ENCODE measurements at regions of chr17 and their contacts with region 1.

Region 1: GRCh38 chr17:55040611-55041010 is 72.0 kb downstream of the STXBP4 start:
- DNase-seq: no peak
- H3K4me3 ChIP-seq: no peak overlapping the region
- H3K27ac ChIP-seq: no peak overlapping the region
- H3K4me1 ChIP-seq: no peaks in the 10 kb centered on the region; a peak in 1 of 4 replicates
- H3K27me3 ChIP-seq: no peaks in the 10 kb centered on the region
- CTCF ChIP-seq: no peak
- EP300 ChIP-seq: no peak
- RAD21 ChIP-seq: no peak

Region 2: GRCh38 chr17:54982399-54982798 is 58.2 kb before region 1 on chr17:
- CTCF ChIA-PET with region 1: no interaction called
- POLR2A ChIA-PET with region 1: no interaction called
- DNase-seq: no peak
- H3K4me3 ChIP-seq: no peak overlapping the region
- H3K27ac ChIP-seq: peak overlapping the region in 1 of 2 experiments; percentile 5; a peak in 1 of 4 replicates
- H3K4me1 ChIP-seq: peaks cover 0 to 15% of the 10 kb centered on the region in 2 experiments; a peak in 2 of 4 replicates
- H3K27me3 ChIP-seq: no peaks in the 10 kb centered on the region
- CTCF ChIP-seq: no peak
- EP300 ChIP-seq: no peak
- RAD21 ChIP-seq: no peak

Region 3: DNA sequence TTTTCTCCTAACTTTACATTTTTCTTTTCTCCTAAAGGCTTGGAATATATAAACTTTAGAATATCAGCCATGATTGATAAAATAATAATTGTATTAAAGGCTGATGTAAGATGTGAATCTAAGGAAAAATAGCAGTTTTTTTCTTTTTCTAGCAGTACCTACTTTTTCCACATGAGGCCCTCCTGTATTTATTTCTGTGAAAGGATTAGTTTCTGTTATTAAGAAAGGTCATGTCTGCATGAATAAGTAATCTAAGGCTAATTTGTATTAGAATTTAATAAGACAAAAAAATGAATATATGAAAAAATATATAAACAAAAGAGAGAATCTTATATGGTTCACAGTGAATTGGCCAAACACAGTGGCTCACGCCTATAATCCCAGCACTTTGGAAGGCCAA is 13.2 kb after region 1 on chr17:
- CTCF ChIA-PET with region 1: interaction called, 15 read pairs
- POLR2A ChIA-PET with region 1: no interaction called
- DNase-seq: peak; percentile 3
- H3K4me3 ChIP-seq: no peak overlapping the region
- H3K27ac ChIP-seq: no peak overlapping the region
- H3K4me1 ChIP-seq: peaks cover 5% of the 10 kb centered on the region in 2 experiments; a peak in 3 of 4 replicates
- H3K27me3 ChIP-seq: no peaks in the 10 kb centered on the region
- CTCF ChIP-seq: peak; percentile 82
- EP300 ChIP-seq: no peak
- RAD21 ChIP-seq: peak; percentile 86